ENCODE measurements at regions of chr20 and their contacts with region 1.

Region 1: GRCh38 chr20:11229772-11230171 is 556.0 kb upstream of the JAG1 start:
- DNase-seq: no peak
- ATAC-seq: no peak
- H3K4me3 ChIP-seq: no peak overlapping the region
- H3K4me3 Mint-ChIP-seq: no peak overlapping the region
- H3K27ac ChIP-seq: no peak overlapping the region
- H3K27ac Mint-ChIP-seq: no peak overlapping the region
- H3K4me1 ChIP-seq: no peaks in the 10 kb centered on the region
- H3K4me1 Mint-ChIP-seq: no peaks in the 10 kb centered on the region
- H3K27me3 ChIP-seq: no peaks in the 10 kb centered on the region
- H3K27me3 Mint-ChIP-seq: no peaks in the 10 kb centered on the region
- CTCF ChIP-seq: no peak

Region 2: DNA sequence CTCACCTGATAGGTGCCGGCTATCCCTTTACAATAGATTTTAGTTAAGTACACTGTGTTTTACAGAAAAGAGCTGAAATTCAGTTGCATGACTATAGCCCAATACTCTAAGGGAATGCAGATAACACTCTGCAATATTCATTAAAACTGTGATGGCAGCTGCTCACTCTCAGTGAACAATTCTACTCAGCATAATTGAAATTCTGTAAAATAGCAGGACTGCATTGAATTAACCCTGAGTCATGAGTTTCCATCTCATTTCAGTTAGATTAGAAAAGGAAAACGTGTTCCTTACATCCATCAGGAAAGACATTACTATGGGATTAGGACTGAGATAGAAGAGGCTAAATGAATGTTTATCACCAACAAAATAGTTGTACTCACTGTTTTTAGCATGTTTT is 57.4 kb after region 1 on chr20:
- CTCF ChIA-PET with region 1: no interaction called
- POLR2A ChIA-PET with region 1: no interaction called
- intact Hi-C with region 1: loop called in 1 of 2 experiments (anchors 10 kb)
- DNase-seq: no peak
- ATAC-seq: no peak
- H3K4me3 ChIP-seq: no peak overlapping the region
- H3K4me3 Mint-ChIP-seq: no peak overlapping the region
- H3K27ac ChIP-seq: no peak overlapping the region
- H3K27ac Mint-ChIP-seq: no peak overlapping the region
- H3K4me1 ChIP-seq: no peaks in the 10 kb centered on the region
- H3K4me1 Mint-ChIP-seq: no peaks in the 10 kb centered on the region
- H3K27me3 ChIP-seq: no peaks in the 10 kb centered on the region
- H3K27me3 Mint-ChIP-seq: no peaks in the 10 kb centered on the region
- CTCF ChIP-seq: no peak

Region 3: GRCh38 chr20:11544029-11544678 is 314.4 kb after region 1 on chr20:
- CTCF ChIA-PET with region 1: no interaction called
- POLR2A ChIA-PET with region 1: no interaction called
- intact Hi-C with region 1: no loop called
- DNase-seq: peak in 2 of 9 experiments; percentile 4 to 11
- ATAC-seq: no peak
- H3K4me3 ChIP-seq: no peak overlapping the region
- H3K4me3 Mint-ChIP-seq: no peak overlapping the region
- H3K27ac ChIP-seq: no peak overlapping the region
- H3K27ac Mint-ChIP-seq: no peak overlapping the region
- H3K4me1 ChIP-seq: no peaks in the 10 kb centered on the region
- H3K4me1 Mint-ChIP-seq: no peaks in the 10 kb centered on the region
- H3K27me3 ChIP-seq: no peaks in the 10 kb centered on the region
- H3K27me3 Mint-ChIP-seq: no peaks in the 10 kb centered on the region
- CTCF ChIP-seq: peak; percentile 22